Caco-2 (cell line): ENCODE measurements at regions of chr3 and their contacts with region 1.

Region 1: GRCh38 chr3:66938338-66938963 is 59.7 kb upstream of the KBTBD8 start:
- DNase-seq: peak; percentile 57 to 68
- H3K4me3 ChIP-seq: no peak overlapping the region
- H3K4me3 Mint-ChIP-seq: no peak overlapping the region
- H3K27ac Mint-ChIP-seq: no peak overlapping the region
- H3K4me1 ChIP-seq: no peaks in the 10 kb centered on the region
- H3K4me1 Mint-ChIP-seq: no peaks in the 10 kb centered on the region
- H3K27me3 ChIP-seq: no peaks in the 10 kb centered on the region
- H3K27me3 Mint-ChIP-seq: peaks cover 6% of the 10 kb centered on the region
- CTCF ChIP-seq: peak; percentile 77 to 83

Region 2: DNA sequence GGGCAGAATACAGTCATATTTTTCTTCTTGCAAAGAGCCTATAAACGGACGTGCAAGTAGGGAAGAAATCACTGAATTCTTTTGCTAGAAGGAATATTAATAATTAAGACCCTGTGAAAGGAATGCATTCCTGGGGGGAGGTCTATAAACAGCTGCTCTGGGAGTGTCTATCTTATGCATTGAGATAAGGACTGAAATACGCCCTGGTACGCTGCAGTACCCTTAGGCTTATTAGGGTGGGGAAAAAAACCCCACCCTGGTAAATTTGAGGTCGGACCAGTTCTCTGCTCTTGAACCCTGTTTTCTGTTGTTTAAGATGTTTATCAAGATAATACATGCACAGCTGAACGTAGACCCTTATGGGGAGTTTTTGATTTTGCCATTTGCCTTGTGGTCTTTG is 40.3 kb before region 1 on chr3:
- CTCF ChIA-PET with region 1: no interaction called
- POLR2A ChIA-PET with region 1: no interaction called
- intact Hi-C with region 1: no loop called
- DNase-seq: peak in 1 of 2 experiments; percentile 10
- H3K4me3 ChIP-seq: no peak overlapping the region
- H3K4me3 Mint-ChIP-seq: no peak overlapping the region
- H3K27ac Mint-ChIP-seq: no peak overlapping the region
- H3K4me1 ChIP-seq: no peaks in the 10 kb centered on the region
- H3K4me1 Mint-ChIP-seq: no peaks in the 10 kb centered on the region
- H3K27me3 ChIP-seq: no peaks in the 10 kb centered on the region
- H3K27me3 Mint-ChIP-seq: peaks cover 11% of the 10 kb centered on the region
- CTCF ChIP-seq: no peak

Region 3: DNA sequence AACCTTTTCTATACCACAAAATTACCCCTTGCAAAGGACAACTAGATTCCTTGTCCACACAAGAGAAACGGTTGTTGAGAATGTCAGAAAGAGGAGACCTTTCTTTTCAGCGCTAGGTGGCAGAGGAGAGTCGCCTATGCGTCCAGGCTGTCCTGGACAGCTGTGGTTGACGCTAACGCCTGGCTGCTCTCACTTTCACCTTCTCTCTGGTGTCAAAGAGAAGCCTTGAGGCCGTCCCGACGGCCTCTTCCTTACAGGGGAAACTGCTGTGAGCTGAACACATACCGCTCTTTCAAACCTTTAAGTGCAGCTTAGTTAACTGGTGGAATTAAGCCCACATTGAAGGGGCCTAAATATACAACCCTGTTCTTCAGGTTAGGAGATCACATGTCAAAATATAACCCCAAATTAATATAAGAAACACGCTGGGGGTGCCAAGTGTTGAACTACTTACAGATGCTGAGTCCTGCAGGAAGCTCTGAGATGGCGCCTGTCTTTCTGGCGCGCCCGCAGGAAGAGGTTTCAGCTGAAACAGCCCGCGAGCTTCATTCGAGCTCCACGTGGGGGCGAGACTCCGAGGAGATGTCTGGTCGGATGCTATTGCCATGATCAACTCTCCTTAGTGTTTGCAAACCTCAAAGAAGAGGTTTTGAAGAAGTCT is 33.6 kb after region 1 on chr3:
- CTCF ChIA-PET with region 1: interaction called, 12 read pairs
- POLR2A ChIA-PET with region 1: no interaction called
- intact Hi-C with region 1: loop called (anchors 1 kb)
- DNase-seq: peak; percentile 76 to 78
- H3K4me3 ChIP-seq: peak overlapping the region; percentile 18; the same call in 1 of the 2 replicates
- H3K4me3 Mint-ChIP-seq: peak overlapping the region; percentile 58
- H3K27ac Mint-ChIP-seq: no peak overlapping the region
- H3K4me1 ChIP-seq: peaks cover 6% of the 10 kb centered on the region; the same call in 1 of the 2 replicates
- H3K4me1 Mint-ChIP-seq: no peaks in the 10 kb centered on the region
- H3K27me3 ChIP-seq: no peaks in the 10 kb centered on the region
- H3K27me3 Mint-ChIP-seq: peaks cover 6% of the 10 kb centered on the region
- CTCF ChIP-seq: peak; percentile 70 to 83

Region 4: DNA sequence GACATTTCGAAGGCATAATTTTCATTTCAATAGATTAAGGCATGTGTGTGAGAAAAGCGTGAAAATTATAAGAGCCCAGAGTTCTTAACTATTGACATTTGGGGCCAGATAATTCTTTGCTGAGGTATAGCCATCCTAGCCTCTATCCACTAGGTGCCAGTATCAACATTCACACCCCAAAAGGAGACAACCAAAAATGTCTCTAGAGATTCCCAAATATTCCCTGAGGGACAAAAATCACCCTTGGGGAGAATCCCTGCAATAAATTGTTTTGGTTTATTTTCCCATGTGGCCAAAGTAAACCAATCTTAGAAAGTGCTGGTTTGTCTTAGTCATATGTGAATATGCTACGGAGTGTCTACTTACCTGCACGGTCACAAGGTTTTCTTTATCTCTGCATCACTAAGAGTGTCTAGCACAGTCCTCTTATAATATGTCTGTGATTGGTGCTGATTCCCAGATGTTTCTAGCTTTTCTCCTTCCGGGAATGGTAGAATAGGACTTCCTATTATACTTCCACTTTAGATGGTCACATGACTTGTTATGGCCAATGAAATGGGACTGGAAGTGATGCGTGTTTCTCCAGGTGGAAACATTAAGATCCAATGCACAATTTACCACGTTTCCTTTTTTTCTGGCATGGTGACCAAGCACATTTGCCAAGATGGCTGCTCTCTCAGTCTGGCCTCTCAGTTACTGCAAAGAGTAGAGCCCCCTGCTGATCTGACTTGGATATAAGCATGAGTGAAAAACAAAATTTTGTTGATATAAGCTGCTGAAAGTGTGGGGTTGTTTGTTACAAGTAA is 51.6 kb after region 1 on chr3:
- CTCF ChIA-PET with region 1: interaction called, 8 read pairs
- POLR2A ChIA-PET with region 1: no interaction called
- intact Hi-C with region 1: loop called (anchors 1 kb)
- DNase-seq: peak in 1 of 2 experiments; percentile 20
- H3K4me3 ChIP-seq: no peak overlapping the region
- H3K4me3 Mint-ChIP-seq: peak overlapping the region; percentile 16
- H3K27ac Mint-ChIP-seq: no peak overlapping the region
- H3K4me1 ChIP-seq: no peaks in the 10 kb centered on the region
- H3K4me1 Mint-ChIP-seq: no peaks in the 10 kb centered on the region
- H3K27me3 ChIP-seq: no peaks in the 10 kb centered on the region
- H3K27me3 Mint-ChIP-seq: no peaks in the 10 kb centered on the region
- CTCF ChIP-seq: peak in 1 of 2 experiments; percentile 8

Region 5: GRCh38 chr3:66998113-66998903 is 59.9 kb after region 1 on chr3 and contains the start of gene KBTBD8:
- CTCF ChIA-PET with region 1: interaction called, 11 read pairs
- POLR2A ChIA-PET with region 1: no interaction called
- intact Hi-C with region 1: no loop called
- DNase-seq: peak; percentile 98
- H3K4me3 ChIP-seq: peak within 1 kb of the TSS; percentile 86
- H3K4me3 Mint-ChIP-seq: peak within 1 kb of the TSS; percentile 88
- H3K27ac Mint-ChIP-seq: no peak within 1 kb of the TSS
- H3K4me1 ChIP-seq: no peaks in the 10 kb centered on the region
- H3K4me1 Mint-ChIP-seq: no peaks in the 10 kb centered on the region
- H3K27me3 ChIP-seq: no peaks in the 10 kb centered on the region
- H3K27me3 Mint-ChIP-seq: no peaks in the 10 kb centered on the region
- CTCF ChIP-seq: no peak
- total RNA-seq, gene KBTBD8: 5.8 and 6.8 TPM in 2 replicates

Region 6: DNA sequence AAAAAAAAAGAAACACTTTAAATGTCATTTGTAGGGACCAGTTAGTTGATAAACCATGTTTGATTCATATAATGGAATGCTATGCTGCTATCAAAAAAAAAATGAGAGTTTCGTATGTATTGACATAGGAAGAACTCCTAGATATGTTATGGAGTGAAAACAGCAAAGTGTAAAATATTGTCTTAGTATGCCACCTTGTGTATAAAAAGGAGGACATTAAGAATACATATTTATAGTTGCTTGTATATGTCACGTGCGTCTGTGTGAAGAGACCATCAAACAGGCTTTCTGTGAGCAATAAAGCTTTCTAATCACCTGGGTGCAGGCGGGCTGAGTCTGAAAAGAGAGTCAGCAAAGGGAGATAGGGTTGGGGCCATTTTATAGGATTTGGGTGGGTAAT is 99.2 kb after region 1 on chr3:
- CTCF ChIA-PET with region 1: interaction called, 6 read pairs
- POLR2A ChIA-PET with region 1: no interaction called
- intact Hi-C with region 1: loop called (anchors 1 kb)
- DNase-seq: no peak
- H3K4me3 ChIP-seq: no peak overlapping the region
- H3K4me3 Mint-ChIP-seq: no peak overlapping the region
- H3K27ac Mint-ChIP-seq: no peak overlapping the region
- H3K4me1 ChIP-seq: no peaks in the 10 kb centered on the region
- H3K4me1 Mint-ChIP-seq: peaks cover 5% of the 10 kb centered on the region
- H3K27me3 ChIP-seq: no peaks in the 10 kb centered on the region
- H3K27me3 Mint-ChIP-seq: peaks cover 3% of the 10 kb centered on the region
- CTCF ChIP-seq: no peak

Region 7: DNA sequence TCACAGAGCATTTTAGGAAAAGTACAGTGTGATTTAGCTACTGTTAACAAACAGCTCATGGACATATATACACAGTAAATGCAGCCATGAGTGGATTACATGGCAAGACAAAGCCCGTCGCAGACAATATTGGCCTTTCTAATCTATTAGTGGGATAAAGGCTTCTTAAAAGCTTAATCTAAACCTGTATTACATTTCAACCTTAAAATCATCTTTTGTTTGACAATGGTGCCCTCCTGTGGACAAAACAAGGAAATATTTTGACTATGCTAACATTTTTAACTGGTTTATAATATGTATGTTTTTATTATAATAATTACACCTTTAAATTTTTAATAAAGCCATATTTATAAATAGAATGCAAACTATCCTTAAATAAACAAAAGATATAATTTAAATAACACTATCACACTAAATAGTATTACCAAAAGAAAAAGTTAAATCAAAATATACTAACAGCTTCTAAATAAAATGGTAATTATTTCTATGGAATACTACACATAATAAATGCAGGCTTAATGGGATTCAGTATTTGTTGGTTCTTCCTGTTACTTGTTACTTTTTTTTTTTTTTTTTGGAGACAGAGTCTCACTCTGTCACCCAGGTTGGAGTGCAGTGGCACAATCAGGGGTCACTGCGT is 1955.3 kb after region 1 on chr3:
- CTCF ChIA-PET with region 1: no interaction called
- POLR2A ChIA-PET with region 1: no interaction called
- intact Hi-C with region 1: loop called (anchors 10 kb)
- DNase-seq: peak in 1 of 2 experiments; percentile 10
- H3K4me3 ChIP-seq: no peak overlapping the region
- H3K4me3 Mint-ChIP-seq: no peak overlapping the region
- H3K27ac Mint-ChIP-seq: no peak overlapping the region
- H3K4me1 ChIP-seq: no peaks in the 10 kb centered on the region
- H3K4me1 Mint-ChIP-seq: no peaks in the 10 kb centered on the region
- H3K27me3 ChIP-seq: no peaks in the 10 kb centered on the region
- H3K27me3 Mint-ChIP-seq: peaks cover 20% of the 10 kb centered on the region
- CTCF ChIP-seq: peak; percentile 23 to 35